ENCODE measurements at regions of chr6 and their contacts with region 1.

Region 1: GRCh38 chr6:15901141-15902115 is 227.5 kb upstream of the MYLIP start:
- DNase-seq: peak; percentile 93
- ATAC-seq: peak; percentile 80
- H3K4me3 ChIP-seq: peak overlapping the region in 3 of 5 experiments; percentile 19 to 43 (median 42)
- H3K4me3 Mint-ChIP-seq: peak overlapping the region; percentile 85
- H3K27ac ChIP-seq: peak overlapping the region; percentile 84 to 93
- H3K27ac Mint-ChIP-seq: peak overlapping the region; percentile 93
- H3K4me1 ChIP-seq: peaks cover 60 to 61% of the 10 kb centered on the region in 2 donors
- H3K4me1 Mint-ChIP-seq: peaks cover 80% of the 10 kb centered on the region
- H3K27me3 ChIP-seq: no peaks in the 10 kb centered on the region
- H3K27me3 Mint-ChIP-seq: no peaks in the 10 kb centered on the region
- CTCF ChIP-seq: peak; percentile 17

Region 2: GRCh38 chr6:15839969-15840541 is 61.4 kb before region 1 on chr6:
- CTCF ChIA-PET with region 1: no interaction called
- POLR2A ChIA-PET with region 1: interaction called, 10 read pairs
- intact Hi-C with region 1: no loop called
- DNase-seq: no peak
- ATAC-seq: no peak
- H3K4me3 ChIP-seq: no peak overlapping the region
- H3K4me3 Mint-ChIP-seq: no peak overlapping the region
- H3K27ac ChIP-seq: no peak overlapping the region
- H3K27ac Mint-ChIP-seq: no peak overlapping the region
- H3K4me1 ChIP-seq: no peaks in the 10 kb centered on the region
- H3K4me1 Mint-ChIP-seq: no peaks in the 10 kb centered on the region
- H3K27me3 ChIP-seq: no peaks in the 10 kb centered on the region
- H3K27me3 Mint-ChIP-seq: peaks cover 3% of the 10 kb centered on the region
- CTCF ChIP-seq: no peak

Region 3: GRCh38 chr6:15887491-15888461 is 13.7 kb before region 1 on chr6:
- CTCF ChIA-PET with region 1: interaction called, 8 read pairs
- POLR2A ChIA-PET with region 1: interaction called, 5 read pairs
- intact Hi-C with region 1: loop called (anchors 2 kb)
- DNase-seq: peak; percentile 35
- ATAC-seq: peak; percentile 65
- H3K4me3 ChIP-seq: peak overlapping the region in 2 of 5 experiments; percentile 2 to 39
- H3K4me3 Mint-ChIP-seq: peak overlapping the region; percentile 75
- H3K27ac ChIP-seq: peak overlapping the region; percentile 26 to 50
- H3K27ac Mint-ChIP-seq: peak overlapping the region; percentile 87
- H3K4me1 ChIP-seq: peaks cover 28% of the 10 kb centered on the region in 2 donors
- H3K4me1 Mint-ChIP-seq: peaks cover 22% of the 10 kb centered on the region
- H3K27me3 ChIP-seq: no peaks in the 10 kb centered on the region
- H3K27me3 Mint-ChIP-seq: no peaks in the 10 kb centered on the region
- CTCF ChIP-seq: no peak

Region 4: GRCh38 chr6:15936503-15936902 is 35.1 kb after region 1 on chr6:
- CTCF ChIA-PET with region 1: interaction called, 3 read pairs
- POLR2A ChIA-PET with region 1: no interaction called
- intact Hi-C with region 1: loop called (anchors 1 kb)
- DNase-seq: peak; percentile 76
- ATAC-seq: peak; percentile 95
- H3K4me3 ChIP-seq: no peak overlapping the region
- H3K4me3 Mint-ChIP-seq: peak overlapping the region; percentile 0
- H3K27ac ChIP-seq: no peak overlapping the region
- H3K27ac Mint-ChIP-seq: peak overlapping the region; percentile 37
- H3K4me1 ChIP-seq: peaks cover 19 to 21% of the 10 kb centered on the region in 2 donors
- H3K4me1 Mint-ChIP-seq: peaks cover 19% of the 10 kb centered on the region
- H3K27me3 ChIP-seq: no peaks in the 10 kb centered on the region
- H3K27me3 Mint-ChIP-seq: no peaks in the 10 kb centered on the region
- CTCF ChIP-seq: no peak

Region 5: DNA sequence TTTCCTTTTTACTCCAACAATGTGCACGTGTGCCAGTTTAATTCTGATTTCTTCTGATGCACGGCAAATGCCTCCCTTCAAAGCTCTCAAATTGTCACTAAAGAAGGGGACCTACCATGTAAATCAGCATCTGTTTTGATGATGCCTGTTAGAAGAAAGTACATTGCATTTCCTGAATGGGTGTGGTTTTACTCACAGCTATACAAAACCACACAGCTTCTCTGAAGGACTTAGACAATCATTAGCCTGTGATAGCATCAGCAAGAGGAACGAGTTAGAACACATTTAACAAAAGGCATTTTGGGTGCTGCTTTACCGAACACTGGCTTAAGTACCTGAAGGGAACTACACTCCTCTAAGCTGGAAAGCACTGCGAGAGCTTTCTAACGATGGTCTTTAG is 750.4 kb after region 1 on chr6:
- CTCF ChIA-PET with region 1: no interaction called
- POLR2A ChIA-PET with region 1: no interaction called
- intact Hi-C with region 1: no loop called
- DNase-seq: no peak
- ATAC-seq: no peak
- H3K4me3 ChIP-seq: no peak overlapping the region
- H3K4me3 Mint-ChIP-seq: no peak overlapping the region
- H3K27ac ChIP-seq: no peak overlapping the region
- H3K27ac Mint-ChIP-seq: no peak overlapping the region
- H3K4me1 ChIP-seq: peaks cover 0 to 7% of the 10 kb centered on the region in 2 donors
- H3K4me1 Mint-ChIP-seq: peaks cover 11% of the 10 kb centered on the region
- H3K27me3 ChIP-seq: no peaks in the 10 kb centered on the region
- H3K27me3 Mint-ChIP-seq: no peaks in the 10 kb centered on the region
- CTCF ChIP-seq: no peak